ENCODE measurements at regions of chr6 and their contacts with region 1.

Region 1: DNA sequence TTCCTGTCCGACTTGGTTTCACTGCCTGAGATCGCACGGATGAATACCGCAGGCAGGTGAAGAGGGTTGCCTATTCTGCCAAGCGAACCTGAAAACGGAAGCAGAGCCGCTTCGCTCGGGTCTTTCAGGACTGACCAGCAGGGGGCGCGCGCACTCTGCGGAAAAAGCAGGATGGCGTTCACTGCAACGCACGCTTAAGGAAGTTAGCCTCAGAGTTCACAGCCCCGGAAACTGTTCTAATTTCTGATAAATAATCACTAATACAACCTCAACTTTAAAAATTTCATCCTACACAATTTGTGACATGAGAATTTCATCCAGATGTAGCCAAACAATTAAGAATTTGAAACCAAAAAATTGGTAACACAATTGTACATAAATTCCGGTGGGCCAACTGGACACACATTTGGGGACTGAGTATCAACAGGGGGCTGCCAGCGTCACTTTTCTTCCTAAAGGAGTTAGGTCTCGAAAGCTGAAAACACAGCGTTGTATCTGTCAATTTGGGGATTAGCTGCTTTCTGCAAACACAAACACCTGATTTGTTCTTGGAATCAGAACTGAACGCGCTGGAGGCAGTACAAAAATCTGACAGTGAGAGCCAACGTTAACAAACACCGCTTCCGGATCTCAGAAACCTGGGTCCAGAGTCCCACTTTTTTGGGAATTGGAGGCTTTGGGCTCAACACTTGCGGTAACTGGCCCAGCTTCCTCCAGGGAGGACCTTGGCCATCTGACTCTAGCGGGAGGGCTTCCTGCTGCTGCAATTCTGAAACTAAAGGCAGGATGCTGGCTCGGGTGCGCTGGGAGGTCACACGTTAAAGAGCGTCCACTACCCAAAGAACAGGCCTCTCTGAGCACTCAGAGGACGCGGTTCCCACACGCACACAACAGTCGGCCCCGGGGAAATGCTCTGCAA is 8.8 kb downstream of the PXDC1 start:
- DNase-seq: peak; percentile 84
- ATAC-seq: peak; percentile 78 to 85

Region 2: GRCh38 chr6:3610206-3610605 is 132.5 kb before region 1 on chr6:
- intact Hi-C with region 1: no loop called
- DNase-seq: no peak
- ATAC-seq: no peak

Region 3: GRCh38 chr6:3697609-3698008 is 45.1 kb before region 1 on chr6:
- intact Hi-C with region 1: no loop called
- DNase-seq: no peak
- ATAC-seq: peak; percentile 71 to 95

Region 4: DNA sequence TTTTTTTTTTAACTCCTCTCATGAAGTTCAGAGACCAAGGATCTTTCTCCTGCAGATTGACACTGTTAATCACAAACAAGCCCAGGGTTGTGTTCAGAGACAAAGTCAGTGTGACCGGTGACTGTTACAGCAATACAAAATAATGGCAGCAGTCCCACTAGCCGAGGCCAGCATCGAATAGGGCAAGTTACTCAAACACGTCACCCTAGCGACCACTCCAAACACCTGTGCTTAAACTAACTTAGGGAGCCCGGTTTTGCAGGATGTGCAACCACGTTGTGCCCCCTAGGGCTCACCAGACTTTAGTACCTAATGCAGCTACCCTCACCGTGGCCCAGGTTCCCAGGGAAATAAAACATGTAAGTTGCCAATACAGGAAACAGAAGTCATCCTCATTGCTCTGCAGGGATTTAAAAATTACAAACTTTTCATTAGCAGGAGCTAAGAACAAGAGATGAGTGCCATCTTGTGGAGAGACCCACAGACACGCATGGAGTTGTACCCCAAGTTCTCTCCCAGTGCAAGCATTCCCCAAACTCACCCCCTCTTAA is 144.5 kb after region 1 on chr6:
- intact Hi-C with region 1: loop called (anchors 2 to 5 kb)
- DNase-seq: no peak
- ATAC-seq: peak; percentile 21 to 35

Measured in left cardiac atrium (tissue), 4 donors.